ENCODE measurements at regions of chr9 and their contacts with region 1.

Region 1: DNA sequence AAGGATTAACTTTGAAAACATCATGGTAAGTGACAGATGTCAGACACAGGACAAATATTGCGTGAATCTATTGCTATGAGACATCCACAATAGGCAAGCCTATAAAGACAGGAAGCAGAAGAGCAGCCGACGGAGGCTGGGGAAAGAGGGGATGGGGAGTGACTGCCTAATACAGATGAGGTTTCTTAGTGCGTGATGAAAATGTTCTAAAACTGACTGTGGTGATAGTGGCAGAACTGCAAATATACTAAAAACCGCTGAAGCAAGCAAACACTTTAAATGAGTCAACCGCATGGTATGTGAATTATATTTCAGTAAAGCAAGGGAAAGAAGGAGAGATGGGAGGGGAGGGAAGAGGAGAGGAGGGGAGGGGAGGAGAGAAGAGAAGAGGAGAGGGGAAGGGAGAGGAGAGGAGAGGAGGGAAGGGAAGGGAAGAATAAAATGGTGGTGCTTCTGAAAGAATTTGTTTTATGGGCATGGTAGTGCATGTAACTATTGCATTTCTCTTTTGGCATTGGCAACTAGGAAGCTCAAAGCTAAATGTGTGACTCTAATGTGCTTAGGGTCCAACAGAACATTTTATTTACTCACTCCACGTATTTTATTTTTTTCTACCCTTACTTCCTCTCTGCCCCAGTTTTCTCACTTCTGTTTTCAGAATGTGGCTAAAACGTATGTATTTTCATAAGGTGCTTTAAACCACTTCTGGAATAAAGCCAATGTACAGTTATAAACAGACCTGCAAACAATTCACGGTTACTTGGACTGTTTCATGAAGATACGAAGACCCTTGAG is 21.3 kb downstream of the AKNA start:
- DNase-seq: peak in 6 of 10 donors; percentile 39 to 74 (median 64)
- ATAC-seq: peak; percentile 59 to 82
- H3K4me3 Mint-ChIP-seq: peak overlapping the region; percentile 59 to 82 (median 78)
- H3K27ac Mint-ChIP-seq: peak overlapping the region; percentile 88 to 99 (median 97)
- H3K4me1 Mint-ChIP-seq: peaks cover 37 to 93% (median 88%) of the 10 kb centered on the region in 4 donors
- H3K27me3 Mint-ChIP-seq: no peaks in the 10 kb centered on the region

Region 2: DNA sequence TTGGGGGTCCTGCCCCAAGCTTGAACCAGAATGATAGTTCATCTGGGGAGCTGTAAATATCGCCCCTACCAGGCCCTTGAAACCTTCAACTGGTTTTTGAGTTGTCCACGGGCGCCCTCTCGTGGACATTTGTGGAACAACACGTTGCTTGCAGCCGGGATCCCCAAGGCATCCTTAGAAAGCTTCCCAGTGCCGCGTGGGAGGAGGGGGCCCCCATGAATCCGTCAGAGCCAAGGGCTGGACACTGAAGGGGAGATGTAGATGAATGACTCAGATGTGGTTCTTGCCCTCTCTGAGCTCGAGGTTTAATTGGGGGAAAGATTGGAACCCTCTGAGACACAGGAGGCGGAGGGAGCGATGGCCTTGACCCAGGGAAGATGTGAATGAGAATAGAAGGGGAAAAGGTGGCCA is 75.5 kb before region 1 on chr9:
- POLR2A ChIA-PET with region 1: no interaction called
- DNase-seq: peak; percentile 43 to 76 (median 62)
- ATAC-seq: peak in 1 of 2 donors; percentile 60
- H3K4me3 Mint-ChIP-seq: no peak overlapping the region
- H3K27ac Mint-ChIP-seq: peak overlapping the region in 3 of 10 donors; percentile 3 to 69 (median 32)
- H3K4me1 Mint-ChIP-seq: peaks cover 2 to 8% (median 4%) of the 10 kb centered on the region in 4 donors
- H3K27me3 Mint-ChIP-seq: peaks cover 3 to 9% (median 4%) of the 10 kb centered on the region in 5 donors

Region 3: GRCh38 chr9:114348906-114349482 is 17.5 kb before region 1 on chr9:
- POLR2A ChIA-PET with region 1: interaction called, 324 read pairs
- DNase-seq: peak in 9 of 10 donors; percentile 37 to 83 (median 59)
- ATAC-seq: peak; percentile 81 to 82
- H3K4me3 Mint-ChIP-seq: peak overlapping the region in 9 of 10 donors; percentile 37 to 81 (median 67)
- H3K27ac Mint-ChIP-seq: peak overlapping the region; percentile 84 to 96 (median 93)
- H3K4me1 Mint-ChIP-seq: peaks cover 28 to 66% (median 52%) of the 10 kb centered on the region in 4 donors
- H3K27me3 Mint-ChIP-seq: no peaks in the 10 kb centered on the region

Region 4: DNA sequence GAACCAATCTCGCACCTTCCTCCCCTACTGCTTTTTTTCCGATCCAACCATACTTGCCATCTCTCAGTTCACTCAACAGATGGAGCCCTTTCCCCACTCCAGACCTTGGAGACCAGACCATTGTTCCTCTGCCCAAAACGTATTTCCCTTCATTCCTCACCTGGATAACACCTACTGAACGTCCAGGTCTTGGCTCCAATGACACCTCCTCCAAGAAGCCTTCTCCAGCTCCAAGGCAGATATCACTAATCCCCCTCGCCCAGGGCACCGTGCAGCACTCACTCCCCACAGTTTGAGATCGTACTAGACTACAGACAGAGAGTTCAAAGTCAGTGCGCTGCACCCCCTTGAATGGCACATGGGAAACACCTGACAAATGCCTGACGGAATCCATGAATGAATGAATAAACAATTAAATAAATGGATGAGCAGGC is 68.4 kb after region 1 on chr9:
- POLR2A ChIA-PET with region 1: no interaction called
- DNase-seq: peak in 1 of 10 donors; percentile 9
- ATAC-seq: no peak
- H3K4me3 Mint-ChIP-seq: no peak overlapping the region
- H3K27ac Mint-ChIP-seq: no peak overlapping the region
- H3K4me1 Mint-ChIP-seq: peaks cover 2 to 6% (median 4%) of the 10 kb centered on the region in 4 donors
- H3K27me3 Mint-ChIP-seq: peaks cover 0 to 2% (median 0%) of the 10 kb centered on the region in 5 donors

Region 5: GRCh38 chr9:114452219-114453165 is 86.0 kb after region 1 on chr9:
- POLR2A ChIA-PET with region 1: no interaction called
- DNase-seq: peak in 7 of 10 donors; percentile 8 to 49 (median 24)
- ATAC-seq: peak; percentile 32 to 57
- H3K4me3 Mint-ChIP-seq: peak overlapping the region in 9 of 10 donors; percentile 16 to 71 (median 39)
- H3K27ac Mint-ChIP-seq: peak overlapping the region; percentile 62 to 92 (median 84)
- H3K4me1 Mint-ChIP-seq: peaks cover 15 to 37% (median 25%) of the 10 kb centered on the region in 4 donors
- H3K27me3 Mint-ChIP-seq: no peaks in the 10 kb centered on the region

Region 6: DNA sequence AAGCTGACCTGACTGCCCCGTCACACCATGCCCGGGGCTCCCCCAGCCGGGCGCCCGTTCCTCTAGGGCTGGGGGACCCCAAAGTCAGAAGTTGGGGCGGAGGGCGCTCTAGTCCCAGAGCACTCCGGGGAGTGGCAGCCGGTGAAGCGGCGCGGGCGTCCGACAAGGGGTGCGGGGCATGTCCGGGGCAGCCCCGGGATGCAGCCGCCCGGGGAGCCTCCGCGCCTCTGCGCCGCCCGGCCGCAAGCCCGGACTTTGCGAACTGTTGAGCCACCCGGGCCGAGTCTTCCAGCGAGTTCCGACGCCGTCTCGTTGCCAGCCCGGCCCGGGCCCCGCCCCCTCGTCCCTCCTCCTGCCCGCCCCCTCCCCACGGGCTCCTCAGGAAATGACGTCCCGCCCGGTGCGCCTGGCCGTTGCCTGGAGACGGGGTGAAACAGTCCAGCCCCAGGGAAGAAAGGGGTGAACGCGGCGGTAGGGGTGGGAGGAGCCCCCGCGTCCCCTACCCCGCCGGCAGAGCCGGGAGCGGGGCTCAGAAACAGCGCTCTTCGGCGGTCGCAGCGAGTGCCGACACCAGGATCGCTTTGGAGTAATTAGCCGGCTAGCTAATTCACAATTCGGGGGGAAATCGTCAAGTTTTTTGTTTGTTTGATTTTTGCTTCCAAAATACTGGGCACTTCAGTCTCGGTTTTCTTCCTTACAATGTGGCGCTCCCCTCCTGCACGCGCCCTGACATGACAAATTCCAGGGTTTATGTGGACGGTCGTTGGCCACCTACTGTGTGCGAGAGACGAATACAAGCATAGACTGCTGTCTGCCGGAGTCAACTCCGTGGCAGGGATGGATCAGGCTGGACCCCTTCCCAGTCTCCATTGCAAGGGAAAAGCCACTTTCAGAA is 138.9 kb after region 1 on chr9 and contains the start of gene WHRN:
- POLR2A ChIA-PET with region 1: interaction called, 10 read pairs
- DNase-seq: peak; percentile 83 to 97 (median 92)
- ATAC-seq: peak; percentile 83 to 88
- H3K4me3 Mint-ChIP-seq: peak within 1 kb of the TSS; percentile 79 to 91 (median 87)
- H3K27ac Mint-ChIP-seq: peak within 1 kb of the TSS; percentile 37 to 96 (median 90)
- H3K4me1 Mint-ChIP-seq: peaks cover 2 to 26% (median 17%) of the 10 kb centered on the region in 4 donors
- H3K27me3 Mint-ChIP-seq: peaks cover 8 to 33% (median 21%) of the 10 kb centered on the region in 5 donors
- polyA plus RNA-seq, gene WHRN: 0.17 to 0.56 (median 0.43) TPM